ENCODE measurements at regions of chr19 and their contacts with region 1.

Region 1: GRCh38 chr19:9785367-9786331 is 17.1 kb upstream of the ZNF846 start:
- DNase-seq: peak; percentile 96
- H3K4me3 ChIP-seq: peak overlapping the region; percentile 60
- H3K27ac ChIP-seq: peak overlapping the region; percentile 81
- H3K4me1 ChIP-seq: no peaks in the 10 kb centered on the region
- H3K27me3 ChIP-seq: no peaks in the 10 kb centered on the region
- CTCF ChIP-seq: no peak

Region 2: GRCh38 chr19:9621156-9622037 is 164.3 kb before region 1 on chr19 and contains the start of gene ZNF561:
- CTCF ChIA-PET with region 1: interaction called, 4 read pairs
- POLR2A ChIA-PET with region 1: no interaction called
- intact Hi-C with region 1: loop called (anchors 1 kb)
- DNase-seq: peak; percentile 92
- H3K4me3 ChIP-seq: peak within 1 kb of the TSS; percentile 78
- H3K27ac ChIP-seq: peak within 1 kb of the TSS; percentile 96
- H3K4me1 ChIP-seq: peaks cover 6% of the 10 kb centered on the region
- H3K27me3 ChIP-seq: no peaks in the 10 kb centered on the region
- CTCF ChIP-seq: no peak
- total RNA-seq, gene ZNF561: 37.7 and 38.2 TPM in 2 replicates

Region 3: GRCh38 chr19:9883231-9883758 is 97.6 kb after region 1 on chr19:
- CTCF ChIA-PET with region 1: no interaction called
- POLR2A ChIA-PET with region 1: no interaction called
- intact Hi-C with region 1: no loop called
- DNase-seq: no peak
- H3K4me3 ChIP-seq: no peak overlapping the region
- H3K27ac ChIP-seq: no peak overlapping the region
- H3K4me1 ChIP-seq: no peaks in the 10 kb centered on the region
- H3K27me3 ChIP-seq: no peaks in the 10 kb centered on the region
- CTCF ChIP-seq: no peak

Measured in A673 (cell line).